ENCODE measurements at regions of chr18 and their contacts with region 1.

Region 1: GRCh38 chr18:220708-221107 is 47.1 kb downstream of the THOC1 start:
- DNase-seq: no peak
- ATAC-seq: no peak
- H3K4me3 Mint-ChIP-seq: no peak overlapping the region
- H3K27ac Mint-ChIP-seq: peak overlapping the region; percentile 26
- H3K4me1 Mint-ChIP-seq: no peaks in the 10 kb centered on the region
- H3K27me3 Mint-ChIP-seq: no peaks in the 10 kb centered on the region

Region 2: GRCh38 chr18:261398-262073 is 40.8 kb after region 1 on chr18:
- CTCF ChIA-PET with region 1: no interaction called
- POLR2A ChIA-PET with region 1: no interaction called
- intact Hi-C with region 1: loop called in 1 of 2 experiments (anchors 5 kb)
- DNase-seq: no peak
- ATAC-seq: no peak
- H3K4me3 Mint-ChIP-seq: no peak overlapping the region
- H3K27ac Mint-ChIP-seq: peak overlapping the region; percentile 67
- H3K4me1 Mint-ChIP-seq: peaks cover 17% of the 10 kb centered on the region
- H3K27me3 Mint-ChIP-seq: no peaks in the 10 kb centered on the region

Region 3: GRCh38 chr18:765764-766549 is 545.2 kb after region 1 on chr18:
- CTCF ChIA-PET with region 1: no interaction called
- POLR2A ChIA-PET with region 1: no interaction called
- intact Hi-C with region 1: no loop called
- DNase-seq: no peak
- ATAC-seq: no peak
- H3K4me3 Mint-ChIP-seq: no peak overlapping the region
- H3K27ac Mint-ChIP-seq: no peak overlapping the region
- H3K4me1 Mint-ChIP-seq: peaks cover 10% of the 10 kb centered on the region
- H3K27me3 Mint-ChIP-seq: no peaks in the 10 kb centered on the region

Measured in activated CD4-positive, alpha-beta T cell treated with anti-CD3 and anti-CD28 coated beads for 36 hours (primary cell).